ENCODE measurements at regions of chr4 and their contacts with region 1.

Region 1: DNA sequence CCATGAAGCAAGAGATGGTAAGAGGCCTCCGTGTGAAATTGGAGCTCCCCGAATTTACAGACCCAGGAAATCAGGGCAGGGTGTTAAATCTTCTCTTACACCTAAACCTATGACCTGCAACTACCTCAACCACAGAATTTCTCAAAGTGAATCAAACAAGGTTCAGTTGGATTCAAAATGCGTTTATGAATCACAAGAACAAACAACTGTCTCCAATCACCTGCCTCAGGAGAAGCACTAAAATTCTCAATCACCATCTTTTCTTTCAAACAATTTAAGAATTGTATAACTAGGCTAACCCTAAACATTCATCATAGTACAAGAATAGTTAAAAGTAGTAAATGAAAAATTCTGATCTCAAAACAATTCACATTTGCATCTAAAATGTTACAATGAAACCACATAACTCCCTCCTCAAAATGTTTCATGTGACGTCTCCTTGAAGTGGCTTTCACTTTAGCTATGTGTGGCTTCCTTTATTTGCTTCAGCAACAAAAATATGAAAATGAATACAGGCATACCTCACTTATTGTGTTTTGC is 19.2 kb downstream of the PPP3CA start:
- DNase-seq: peak in 1 of 2 donors; percentile 78
- ATAC-seq: peak; percentile 76 to 84 (median 84)
- H3K4me3 ChIP-seq: no peak overlapping the region
- H3K4me3 Mint-ChIP-seq: peak overlapping the region; percentile 74
- H3K27ac ChIP-seq: peak overlapping the region; percentile 80
- H3K27ac Mint-ChIP-seq: peak overlapping the region; percentile 90 to 92
- H3K4me1 ChIP-seq: peaks cover 16% of the 10 kb centered on the region
- H3K4me1 Mint-ChIP-seq: peaks cover 85 to 93% of the 10 kb centered on the region in 2 donors
- H3K27me3 ChIP-seq: no peaks in the 10 kb centered on the region
- H3K27me3 Mint-ChIP-seq: no peaks in the 10 kb centered on the region
- CTCF ChIP-seq: no peak

Region 2: GRCh38 chr4:101282076-101282844 is 45.9 kb before region 1 on chr4:
- intact Hi-C with region 1: loop called (anchors 5 kb)
- DNase-seq: peak in 1 of 2 donors; percentile 56
- ATAC-seq: peak; percentile 61 to 74 (median 65)
- H3K4me3 ChIP-seq: no peak overlapping the region
- H3K4me3 Mint-ChIP-seq: peak overlapping the region; percentile 58
- H3K27ac ChIP-seq: peak overlapping the region; percentile 23
- H3K27ac Mint-ChIP-seq: peak overlapping the region; percentile 80 to 87
- H3K4me1 ChIP-seq: peaks cover 13% of the 10 kb centered on the region
- H3K4me1 Mint-ChIP-seq: peaks cover 67 to 73% of the 10 kb centered on the region in 2 donors
- H3K27me3 ChIP-seq: no peaks in the 10 kb centered on the region
- H3K27me3 Mint-ChIP-seq: no peaks in the 10 kb centered on the region
- CTCF ChIP-seq: no peak